SK-N-SH (cell line): ENCODE measurements at regions of chr12 and their contacts with region 1.

Region 1: DNA sequence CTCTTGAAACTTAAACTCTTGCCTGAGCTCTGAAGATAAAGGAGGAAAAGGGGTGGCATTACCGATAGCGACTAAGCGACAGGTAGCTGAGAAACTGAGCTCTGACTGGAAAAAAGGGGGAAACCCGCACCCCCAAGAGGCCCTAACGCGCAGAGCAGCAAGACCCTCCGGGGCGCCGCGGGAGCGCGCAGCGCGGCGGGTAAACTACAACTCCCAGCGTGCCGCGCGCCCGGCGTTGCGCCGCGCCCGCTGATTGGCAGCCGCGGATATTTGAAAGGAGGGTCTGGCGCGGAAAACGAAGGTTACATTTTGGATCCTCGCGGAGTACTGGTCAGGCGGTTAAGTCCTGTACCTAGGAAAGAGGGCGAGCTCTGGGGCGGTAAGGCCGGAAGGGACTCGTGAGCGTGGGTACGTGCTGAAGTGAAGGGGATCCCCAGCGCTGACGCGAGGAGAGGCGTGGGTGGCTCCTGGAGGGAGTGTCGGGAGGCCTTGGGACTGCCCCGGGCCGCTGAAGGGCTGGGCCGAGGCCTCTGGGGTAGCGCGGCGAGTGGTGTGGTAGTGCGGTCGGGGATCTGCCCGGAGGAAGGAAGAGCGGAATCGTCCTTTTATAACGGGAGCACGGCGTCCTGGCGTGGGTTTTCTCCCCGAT is at the start of gene ESPL1:
- DNase-seq: peak; percentile 95
- H3K4me3 ChIP-seq: peak within 1 kb of the TSS; percentile 76
- H3K27ac ChIP-seq: peak within 1 kb of the TSS; percentile 5 to 20; a peak in 1 of 4 replicates
- H3K4me1 ChIP-seq: peaks cover 5 to 21% of the 10 kb centered on the region in 2 experiments; a peak in 2 of 4 replicates
- H3K27me3 ChIP-seq: no peaks in the 10 kb centered on the region
- CTCF ChIP-seq: peak; percentile 53
- EP300 ChIP-seq: no peak; a peak in 1 of 4 replicates
- RAD21 ChIP-seq: peak; percentile 69
- polyA plus RNA-seq, gene ESPL1: 6.9 and 8.6 TPM in 2 replicates

Region 2: DNA sequence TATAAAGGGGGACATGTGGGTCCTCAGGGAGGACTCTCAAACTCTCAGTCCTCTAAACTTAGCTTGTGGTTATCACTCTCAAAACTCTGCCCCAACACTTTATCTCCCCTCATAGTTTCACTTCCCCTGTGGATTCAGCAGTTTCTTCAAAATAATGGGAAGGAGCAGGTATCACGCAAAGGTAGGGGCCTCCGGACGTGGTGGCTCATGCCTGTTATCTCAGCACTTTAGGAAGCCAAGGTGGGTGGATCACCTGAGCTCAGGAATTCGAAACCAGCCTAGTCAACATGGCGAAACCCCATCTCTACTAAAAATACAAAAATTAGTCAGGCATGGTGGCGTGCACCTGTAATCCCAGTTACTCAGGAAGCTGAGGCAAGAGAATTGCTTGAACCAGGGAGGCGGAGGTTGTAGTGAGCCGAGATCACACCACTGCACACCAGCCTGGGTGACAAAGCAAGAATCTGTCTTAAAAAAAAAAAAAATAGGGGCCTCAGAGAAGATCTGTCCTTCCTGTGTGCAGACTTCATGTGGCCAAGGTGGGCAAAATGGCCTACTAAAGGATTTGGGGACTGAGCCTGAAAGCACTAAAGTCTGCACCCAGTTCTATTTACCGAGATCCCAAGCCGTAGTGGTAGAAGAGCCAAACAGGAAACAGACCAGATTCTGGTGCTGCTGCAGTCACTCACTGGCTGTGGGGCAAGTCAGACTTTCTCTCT is 67.5 kb before region 1 on chr12:
- CTCF ChIA-PET with region 1: interaction called, 21 read pairs
- POLR2A ChIA-PET with region 1: no interaction called
- DNase-seq: no peak
- H3K4me3 ChIP-seq: no peak overlapping the region
- H3K27ac ChIP-seq: peak overlapping the region in 1 of 2 experiments; percentile 46; a peak in 1 of 4 replicates
- H3K4me1 ChIP-seq: no peaks in the 10 kb centered on the region
- H3K27me3 ChIP-seq: no peaks in the 10 kb centered on the region
- CTCF ChIP-seq: no peak
- EP300 ChIP-seq: no peak
- RAD21 ChIP-seq: no peak

Region 3: GRCh38 chr12:53220801-53221202 is 47.3 kb before region 1 on chr12:
- CTCF ChIA-PET with region 1: interaction called, 223 read pairs
- POLR2A ChIA-PET with region 1: interaction called, 6 read pairs
- DNase-seq: peak; percentile 94
- H3K4me3 ChIP-seq: peak overlapping the region; percentile 54 to 75
- H3K27ac ChIP-seq: peak overlapping the region; percentile 99
- H3K4me1 ChIP-seq: peaks cover 52 to 58% of the 10 kb centered on the region in 2 experiments
- H3K27me3 ChIP-seq: no peaks in the 10 kb centered on the region
- CTCF ChIP-seq: no peak
- EP300 ChIP-seq: no peak
- RAD21 ChIP-seq: no peak

Region 4: GRCh38 chr12:53251477-53252348 is 16.4 kb before region 1 on chr12:
- CTCF ChIA-PET with region 1: interaction called, 46 read pairs
- POLR2A ChIA-PET with region 1: interaction called, 3 read pairs
- DNase-seq: peak; percentile 97
- H3K4me3 ChIP-seq: peak overlapping the region; percentile 66 to 91
- H3K27ac ChIP-seq: peak overlapping the region; percentile 57 to 84; a peak in 3 of 4 replicates
- H3K4me1 ChIP-seq: peaks cover 0 to 16% of the 10 kb centered on the region in 2 experiments; a peak in 1 of 4 replicates
- H3K27me3 ChIP-seq: no peaks in the 10 kb centered on the region
- CTCF ChIP-seq: peak; percentile 59
- EP300 ChIP-seq: no peak
- RAD21 ChIP-seq: peak; percentile 81

Region 5: DNA sequence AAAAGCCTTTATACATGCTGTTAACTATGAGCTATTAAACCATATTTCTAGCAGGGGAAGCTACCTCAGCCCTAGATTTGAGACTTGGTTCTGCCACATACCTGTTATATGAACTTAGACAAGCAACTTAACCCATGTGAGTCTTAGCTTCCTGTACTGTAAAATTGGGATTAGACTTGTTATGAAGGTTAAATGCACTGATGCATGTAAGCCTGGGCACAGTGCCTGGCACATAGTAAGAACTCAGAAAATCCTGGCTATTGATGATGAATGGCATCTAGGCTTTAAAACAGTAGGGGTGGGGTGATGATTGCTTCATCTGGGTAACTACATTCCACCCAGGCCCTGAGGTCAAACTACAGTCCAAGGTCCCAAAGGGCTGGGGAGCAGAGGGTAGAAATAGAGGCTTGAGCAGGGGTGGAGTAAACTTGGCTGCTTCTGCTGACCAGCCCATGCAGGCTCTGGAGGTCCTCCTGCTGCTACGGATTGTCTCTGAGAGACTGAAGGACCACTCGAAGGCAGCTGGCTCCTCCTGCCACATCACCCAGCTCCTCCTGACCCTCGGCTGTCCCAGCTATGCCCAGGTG is 11.3 kb after region 1 on chr12:
- CTCF ChIA-PET with region 1: interaction called, 103 read pairs
- POLR2A ChIA-PET with region 1: interaction called, 4 read pairs
- DNase-seq: no peak
- H3K4me3 ChIP-seq: no peak overlapping the region
- H3K27ac ChIP-seq: no peak overlapping the region
- H3K4me1 ChIP-seq: no peaks in the 10 kb centered on the region
- H3K27me3 ChIP-seq: no peaks in the 10 kb centered on the region
- CTCF ChIP-seq: no peak
- EP300 ChIP-seq: no peak
- RAD21 ChIP-seq: no peak

Region 6: DNA sequence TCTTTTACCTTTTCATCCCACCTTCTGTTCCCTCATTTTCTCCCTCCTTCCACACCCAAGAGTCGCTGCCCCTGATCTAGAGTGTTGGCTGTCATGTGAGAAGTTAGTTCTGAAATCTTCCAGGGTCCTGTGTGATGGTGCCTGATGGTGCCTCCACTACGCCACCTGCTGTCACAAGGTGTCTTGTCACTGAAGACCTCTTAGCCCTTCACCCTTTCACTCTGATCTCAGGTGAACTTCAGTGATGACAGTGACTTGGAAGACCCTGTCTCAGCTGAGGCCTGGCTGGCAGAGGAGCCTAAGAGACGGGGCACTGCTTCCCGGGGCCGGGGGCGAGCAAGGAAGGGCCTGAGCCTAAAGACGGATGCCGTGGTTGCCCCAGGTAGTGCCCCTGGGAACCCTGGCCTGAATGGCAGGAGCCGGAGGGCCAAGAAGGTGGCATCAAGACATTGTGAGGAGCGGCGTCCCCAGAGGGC is 19.7 kb after region 1 on chr12:
- CTCF ChIA-PET with region 1: interaction called, 103 read pairs
- POLR2A ChIA-PET with region 1: no interaction called
- DNase-seq: peak; percentile 72
- H3K4me3 ChIP-seq: no peak overlapping the region; a peak in 1 of 4 replicates
- H3K27ac ChIP-seq: no peak overlapping the region
- H3K4me1 ChIP-seq: peaks cover 0 to 19% of the 10 kb centered on the region in 2 experiments; a peak in 2 of 4 replicates
- H3K27me3 ChIP-seq: no peaks in the 10 kb centered on the region
- CTCF ChIP-seq: peak; percentile 73
- EP300 ChIP-seq: no peak
- RAD21 ChIP-seq: peak; percentile 82

Region 7: GRCh38 chr12:53365245-53365904 is 97.3 kb after region 1 on chr12:
- CTCF ChIA-PET with region 1: no interaction called
- POLR2A ChIA-PET with region 1: no interaction called
- DNase-seq: no peak
- H3K4me3 ChIP-seq: no peak overlapping the region
- H3K27ac ChIP-seq: no peak overlapping the region
- H3K4me1 ChIP-seq: no peaks in the 10 kb centered on the region
- H3K27me3 ChIP-seq: no peaks in the 10 kb centered on the region
- CTCF ChIP-seq: no peak
- EP300 ChIP-seq: no peak
- RAD21 ChIP-seq: no peak